ENCODE measurements at regions of chr16 and their contacts with region 1.

Region 1: DNA sequence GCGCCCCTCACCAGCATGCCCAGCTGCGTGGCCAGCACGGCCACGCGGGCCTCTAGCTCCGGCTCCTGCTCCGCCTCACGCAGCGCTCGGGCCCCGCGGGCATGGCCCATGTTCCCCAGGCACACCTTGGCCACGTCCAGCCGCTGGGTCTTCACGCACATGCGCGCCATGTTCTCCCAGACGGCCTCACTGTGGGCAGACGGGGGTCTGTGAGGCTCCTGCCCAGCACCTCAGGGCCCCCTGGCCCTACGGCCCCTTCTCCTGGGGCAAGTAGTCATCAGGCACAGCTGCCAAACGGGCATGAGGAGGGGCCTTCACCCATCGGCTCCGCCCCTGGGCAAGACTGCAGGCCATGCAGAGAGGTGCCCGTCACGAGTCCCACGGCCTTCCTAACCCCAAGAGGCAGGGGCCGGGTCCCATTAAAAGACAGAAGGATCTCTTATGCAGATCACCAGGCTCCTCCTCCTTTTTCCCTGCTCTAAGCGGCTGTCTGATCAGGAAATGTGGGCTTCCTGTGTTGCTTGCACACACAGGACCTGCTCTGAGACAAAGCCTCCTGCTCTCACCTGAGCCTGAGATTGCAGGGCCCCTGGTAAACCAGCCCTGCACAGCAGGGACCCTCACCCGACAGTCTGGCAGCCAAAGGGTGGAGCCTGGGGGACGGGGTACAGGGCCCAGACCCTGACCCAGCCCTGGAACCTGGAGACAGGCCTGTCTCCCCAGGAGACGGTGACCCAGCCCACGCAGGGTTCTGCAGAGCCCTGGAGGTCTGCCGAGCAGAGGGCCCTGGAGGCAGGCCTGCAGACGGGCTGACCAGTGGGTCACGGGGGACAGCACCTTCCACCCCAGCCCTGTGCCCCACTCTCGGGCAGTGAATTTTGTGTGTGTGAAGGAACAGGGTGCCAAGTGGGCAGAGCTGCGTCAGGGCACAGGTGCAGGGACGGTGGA is 6.6 kb upstream of the TMEM204 start:
- DNase-seq: peak; percentile 62
- ATAC-seq: peak; percentile 55
- H3K4me3 Mint-ChIP-seq: peak overlapping the region; percentile 80
- H3K27ac Mint-ChIP-seq: peak overlapping the region; percentile 82
- H3K4me1 Mint-ChIP-seq: peaks cover 21% of the 10 kb centered on the region
- H3K27me3 Mint-ChIP-seq: no peaks in the 10 kb centered on the region

Region 2: DNA sequence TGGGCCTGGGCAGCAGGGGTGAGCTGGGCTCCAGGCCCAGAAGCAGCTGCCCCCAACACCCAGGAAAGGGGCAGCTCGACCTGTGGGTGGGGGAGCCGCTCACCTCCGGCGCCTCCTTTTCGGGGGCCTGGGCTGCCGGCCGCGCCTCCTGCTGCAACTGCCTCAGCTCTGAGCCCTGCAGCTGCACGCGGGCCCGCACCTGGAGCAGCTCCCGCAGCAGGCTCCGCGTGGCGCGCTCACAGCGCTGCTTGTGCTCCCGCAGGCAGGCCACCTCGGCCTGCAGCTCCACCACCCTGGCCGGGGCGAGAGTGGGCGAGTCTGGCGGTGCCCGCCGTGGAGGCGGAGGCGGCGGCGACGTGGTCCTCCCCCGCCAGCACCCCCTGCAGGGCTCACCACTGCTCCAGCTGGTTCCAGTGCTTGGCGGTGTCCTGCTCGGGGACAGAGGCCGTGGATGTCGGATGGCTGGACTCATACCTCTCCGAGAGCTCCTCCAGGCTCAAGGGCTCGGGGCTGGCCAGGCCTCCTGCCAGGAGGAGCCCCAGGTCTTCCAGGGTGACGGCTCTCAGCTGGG is 83.4 kb before region 1 on chr16:
- POLR2A ChIA-PET with region 1: no interaction called
- DNase-seq: no peak
- ATAC-seq: no peak
- H3K4me3 Mint-ChIP-seq: no peak overlapping the region
- H3K27ac Mint-ChIP-seq: no peak overlapping the region
- H3K4me1 Mint-ChIP-seq: no peaks in the 10 kb centered on the region
- H3K27me3 Mint-ChIP-seq: no peaks in the 10 kb centered on the region

Region 3: DNA sequence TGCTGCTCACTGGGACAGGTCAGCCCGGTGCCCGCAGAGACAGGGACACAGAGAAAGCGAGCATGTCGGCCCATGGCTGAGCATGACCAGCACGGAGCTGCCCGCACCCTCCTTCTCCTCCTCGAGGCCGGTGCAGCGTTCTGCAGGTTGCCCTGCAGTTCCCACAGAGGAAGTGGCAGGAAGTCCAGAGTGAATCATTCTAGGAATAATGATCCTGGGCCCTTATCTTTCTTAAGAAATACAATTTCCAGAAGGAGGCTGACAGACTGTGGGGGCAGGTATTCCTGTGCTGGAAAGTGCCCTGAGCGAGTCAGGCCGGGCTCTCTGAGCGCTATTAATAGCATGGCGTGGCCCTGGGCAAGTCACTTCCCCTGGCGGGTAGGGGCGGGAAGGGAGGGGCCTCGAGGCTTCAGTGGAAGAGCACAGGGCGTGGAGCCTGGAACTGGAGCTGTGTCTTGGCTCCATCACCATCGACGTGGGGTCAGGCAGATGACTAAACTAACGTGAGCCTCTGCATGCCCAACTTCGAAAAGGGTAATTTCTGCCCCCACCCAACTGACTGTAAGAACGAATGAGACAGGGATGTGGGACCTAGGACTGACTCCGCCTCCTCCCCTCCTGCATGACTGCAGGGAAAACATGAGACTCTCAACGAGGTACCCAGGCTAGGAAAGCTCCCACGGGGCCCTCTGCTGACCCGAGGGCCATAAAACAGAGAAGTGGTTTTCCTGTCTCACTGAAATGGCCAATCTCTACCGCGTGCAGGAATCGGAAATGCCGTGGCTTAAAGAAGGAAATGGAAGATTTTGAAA is 16.4 kb after region 1 on chr16:
- POLR2A ChIA-PET with region 1: interaction called, 14 read pairs
- DNase-seq: peak; percentile 54
- ATAC-seq: peak; percentile 74
- H3K4me3 Mint-ChIP-seq: peak overlapping the region; percentile 66
- H3K27ac Mint-ChIP-seq: peak overlapping the region; percentile 81
- H3K4me1 Mint-ChIP-seq: peaks cover 52% of the 10 kb centered on the region
- H3K27me3 Mint-ChIP-seq: no peaks in the 10 kb centered on the region

Measured in activated naive CD8-positive, alpha-beta T cell treated with anti-CD3 and anti-CD28 coated beads, Interleukin-2, amount 10 ng/mL, durations not matched to agents 7 days and 5 days (primary cell).